Vagina (tissue), 2 donors: ENCODE measurements at regions of chr1 and their contacts with region 1.

Region 1: GRCh38 chr1:54950369-54951163 is 29.9 kb upstream of the TMEM61 start:
- DNase-seq: no peak
- H3K4me3 ChIP-seq: peak overlapping the region in 1 of 2 donors; percentile 15
- H3K27ac ChIP-seq: peak overlapping the region; percentile 56
- H3K4me1 ChIP-seq: peaks cover 11% of the 10 kb centered on the region
- H3K27me3 ChIP-seq: no peaks in the 10 kb centered on the region
- CTCF ChIP-seq: peak; percentile 63 to 75 (median 63)
- POLR2A ChIP-seq: no peak

Region 2: DNA sequence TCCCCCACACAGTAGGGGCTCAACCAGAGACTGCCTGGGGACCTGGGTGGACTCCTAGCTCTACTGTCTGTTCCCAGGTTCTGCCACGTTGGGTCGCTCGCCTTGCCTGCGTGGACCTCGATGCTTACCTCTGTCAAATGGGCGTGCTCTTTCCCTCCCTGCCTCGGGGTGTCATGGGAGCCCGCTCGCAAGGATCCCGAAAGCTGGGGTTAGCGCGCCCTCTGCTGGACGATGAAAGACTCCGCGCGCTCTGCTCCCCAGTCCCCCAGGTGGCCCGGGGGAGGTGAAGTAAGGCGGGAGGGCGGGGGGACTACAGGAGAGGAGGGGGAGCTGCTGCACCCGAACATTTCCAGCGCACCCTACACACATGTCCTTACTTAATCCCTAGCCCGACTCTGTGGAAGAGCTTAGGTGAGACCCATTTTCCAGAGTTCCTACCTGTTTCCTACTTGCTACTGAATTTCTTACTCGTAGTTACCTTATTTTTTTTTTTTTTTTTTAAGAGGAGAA is 45.8 kb after region 1 on chr1:
- intact Hi-C with region 1: loop called (anchors 5 kb)
- DNase-seq: no peak
- H3K4me3 ChIP-seq: no peak overlapping the region
- H3K27ac ChIP-seq: no peak overlapping the region
- H3K4me1 ChIP-seq: peaks cover 8% of the 10 kb centered on the region
- H3K27me3 ChIP-seq: no peaks in the 10 kb centered on the region
- CTCF ChIP-seq: peak; percentile 36 to 80 (median 59)
- POLR2A ChIP-seq: no peak

Region 3: DNA sequence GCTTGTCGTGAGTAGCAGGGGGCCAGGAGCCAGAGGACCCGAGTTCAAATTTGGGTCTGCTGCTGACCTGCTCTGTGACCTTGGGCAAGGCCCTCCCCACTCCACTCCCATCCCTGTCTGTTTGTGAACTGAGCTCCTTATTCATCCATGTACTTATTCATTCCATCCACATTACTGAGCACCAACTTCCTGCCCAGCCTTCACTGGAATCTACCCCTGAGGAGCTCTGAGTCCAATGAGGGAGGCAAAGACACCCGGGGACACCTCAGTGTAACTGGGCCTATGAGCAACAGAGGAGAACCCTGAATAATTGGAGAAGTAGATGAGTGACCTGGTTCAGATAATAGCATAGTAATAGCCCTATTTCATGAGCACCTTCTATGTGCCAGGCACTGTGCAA is 57.1 kb after region 1 on chr1:
- intact Hi-C with region 1: no loop called
- DNase-seq: no peak
- H3K4me3 ChIP-seq: no peak overlapping the region
- H3K27ac ChIP-seq: no peak overlapping the region
- H3K4me1 ChIP-seq: no peaks in the 10 kb centered on the region
- H3K27me3 ChIP-seq: no peaks in the 10 kb centered on the region
- CTCF ChIP-seq: no peak
- POLR2A ChIP-seq: no peak